ENCODE measurements at regions of chr9 and their contacts with region 1.

Region 1: DNA sequence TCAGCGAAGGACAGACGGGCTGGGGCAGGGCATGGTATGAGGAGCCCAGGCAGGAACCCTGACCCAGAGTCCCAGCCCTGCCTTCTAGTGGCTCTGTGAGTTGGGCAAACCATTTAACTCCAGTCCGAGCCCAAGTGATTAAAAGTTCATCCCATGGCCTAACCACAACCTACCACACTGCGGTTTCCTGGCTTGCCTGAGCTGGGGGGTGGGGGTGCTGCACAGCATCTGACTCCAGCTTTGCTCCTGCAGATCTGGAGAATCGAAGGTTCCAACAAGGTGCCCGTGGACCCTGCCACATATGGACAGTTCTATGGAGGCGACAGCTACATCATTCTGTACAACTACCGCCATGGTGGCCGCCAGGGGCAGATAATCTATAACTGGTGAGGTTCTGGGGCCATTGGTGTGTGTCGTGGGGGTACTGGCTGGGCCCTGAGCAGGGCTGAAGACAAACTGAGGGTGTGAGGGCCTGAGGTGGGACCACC is 49.0 kb downstream of the STOM start:
- DNase-seq: no peak
- ATAC-seq: no peak
- H3K4me3 ChIP-seq: no peak overlapping the region
- H3K27ac ChIP-seq: peak overlapping the region in 1 of 2 donors; percentile 68
- H3K4me1 ChIP-seq: no peaks in the 10 kb centered on the region
- H3K27me3 ChIP-seq: no peaks in the 10 kb centered on the region

Region 2: GRCh38 chr9:121278535-121279261 is 42.4 kb before region 1 on chr9:
- intact Hi-C with region 1: loop called in 1 of 2 experiments (anchors 5 kb)
- DNase-seq: peak in 1 of 2 donors; percentile 80
- ATAC-seq: peak; percentile 85
- H3K4me3 ChIP-seq: no peak overlapping the region
- H3K27ac ChIP-seq: peak overlapping the region; percentile 81 to 98
- H3K4me1 ChIP-seq: peaks cover 20 to 25% of the 10 kb centered on the region in 2 donors
- H3K27me3 ChIP-seq: no peaks in the 10 kb centered on the region

Region 3: DNA sequence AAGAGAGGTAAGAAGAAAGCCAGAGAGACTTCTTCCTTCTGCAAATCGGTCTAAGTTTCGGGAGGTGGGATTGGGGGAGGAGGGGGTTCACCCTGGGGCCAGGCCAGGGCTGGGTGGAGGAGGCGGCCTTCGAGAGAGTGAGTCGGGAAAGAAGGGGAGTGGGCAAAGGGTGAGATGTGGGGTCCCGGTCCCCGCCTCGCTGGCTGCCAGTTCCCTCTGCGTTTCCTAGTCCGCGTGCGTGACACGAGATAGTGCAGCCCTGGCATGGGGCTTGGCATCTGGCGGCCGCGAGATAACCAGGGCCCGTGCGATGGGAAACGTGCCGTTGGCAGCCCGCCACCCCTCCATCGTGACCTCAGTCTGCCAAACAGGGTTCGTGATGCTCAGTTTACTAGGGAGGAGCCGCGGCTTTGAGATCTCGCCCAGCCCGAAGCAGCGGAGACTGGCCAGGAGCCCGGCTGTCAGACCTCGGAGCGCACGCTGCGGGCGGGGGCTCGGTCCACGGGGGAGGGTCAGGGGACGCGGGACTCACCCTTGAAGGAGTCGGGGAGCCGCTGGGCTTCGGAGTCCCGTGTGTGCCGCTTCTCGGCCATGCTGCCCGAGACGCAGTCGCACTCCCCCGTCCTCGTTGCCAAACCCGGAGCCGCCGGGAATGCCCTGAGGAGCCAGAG is 48.7 kb after region 1 on chr9 and contains the start of gene STOM:
- intact Hi-C with region 1: loop called (anchors 2 kb)
- DNase-seq: peak; percentile 92 to 96
- ATAC-seq: peak; percentile 89
- H3K4me3 ChIP-seq: peak within 1 kb of the TSS; percentile 48 to 84
- H3K27ac ChIP-seq: peak within 1 kb of the TSS; percentile 62 to 78
- H3K4me1 ChIP-seq: peaks cover 0 to 6% of the 10 kb centered on the region in 2 donors
- H3K27me3 ChIP-seq: no peaks in the 10 kb centered on the region
- total RNA-seq, gene STOM: 375 to 384 TPM

Region 4: GRCh38 chr9:121399883-121400607 is 79.0 kb after region 1 on chr9:
- intact Hi-C with region 1: loop called in 1 of 2 experiments (anchors 5 kb)
- DNase-seq: no peak
- ATAC-seq: peak; percentile 71
- H3K4me3 ChIP-seq: no peak overlapping the region
- H3K27ac ChIP-seq: no peak overlapping the region
- H3K4me1 ChIP-seq: no peaks in the 10 kb centered on the region
- H3K27me3 ChIP-seq: no peaks in the 10 kb centered on the region

Measured in aorta (tissue), 5 donors.